ENCODE measurements at regions of chr17 and their contacts with region 1.

Region 1: DNA sequence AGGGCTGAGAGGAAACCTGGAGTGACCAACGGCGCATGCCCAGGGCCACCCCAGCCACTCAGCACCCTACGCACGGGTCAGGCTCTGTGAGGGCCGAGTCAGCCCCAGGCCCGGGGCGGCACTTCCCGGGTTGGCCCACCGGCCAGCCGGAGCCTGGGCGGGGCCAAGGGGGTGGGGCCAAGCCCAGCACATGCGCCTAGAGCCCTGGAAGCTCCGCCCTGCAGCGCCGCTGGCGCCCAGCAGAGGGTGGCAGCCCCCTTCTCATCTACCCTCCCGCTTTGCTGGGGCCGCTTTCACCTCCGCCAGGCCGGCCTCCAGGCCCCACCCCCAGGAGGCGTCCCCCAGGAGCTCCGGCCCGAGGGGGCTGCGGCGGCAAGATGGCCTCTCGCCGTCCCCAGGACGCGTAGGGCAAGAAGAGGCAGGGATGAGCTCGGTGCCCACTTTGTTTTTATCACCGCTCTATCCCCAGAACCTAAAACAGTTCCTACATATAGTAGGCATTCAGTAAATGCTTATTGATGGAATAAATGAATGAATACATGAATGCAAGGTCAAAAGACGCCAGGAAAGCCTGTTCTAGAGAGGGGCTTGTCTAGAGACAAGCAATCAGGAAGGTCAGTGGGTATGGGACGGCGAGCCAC is 31.3 kb downstream of the MYO18A start:
- DNase-seq: peak; percentile 86 to 93 (median 90)
- H3K4me3 ChIP-seq: peak overlapping the region; percentile 37 to 84 (median 60)
- H3K27ac ChIP-seq: peak overlapping the region; percentile 20 to 97 (median 93)
- H3K27me3 ChIP-seq: no peaks in the 10 kb centered on the region
- CTCF ChIP-seq: peak; percentile 88 to 100 (median 98)

Region 2: GRCh38 chr17:29129731-29130130 is 19.2 kb before region 1 on chr17:
- intact Hi-C with region 1: loop called in 1 of 2 experiments (anchors 2 kb)
- DNase-seq: no peak
- H3K4me3 ChIP-seq: no peak overlapping the region
- H3K27ac ChIP-seq: peak overlapping the region in 15 of 59 donors; percentile 9 to 60 (median 25)
- H3K27me3 ChIP-seq: no peaks in the 10 kb centered on the region
- CTCF ChIP-seq: no peak

Region 3: DNA sequence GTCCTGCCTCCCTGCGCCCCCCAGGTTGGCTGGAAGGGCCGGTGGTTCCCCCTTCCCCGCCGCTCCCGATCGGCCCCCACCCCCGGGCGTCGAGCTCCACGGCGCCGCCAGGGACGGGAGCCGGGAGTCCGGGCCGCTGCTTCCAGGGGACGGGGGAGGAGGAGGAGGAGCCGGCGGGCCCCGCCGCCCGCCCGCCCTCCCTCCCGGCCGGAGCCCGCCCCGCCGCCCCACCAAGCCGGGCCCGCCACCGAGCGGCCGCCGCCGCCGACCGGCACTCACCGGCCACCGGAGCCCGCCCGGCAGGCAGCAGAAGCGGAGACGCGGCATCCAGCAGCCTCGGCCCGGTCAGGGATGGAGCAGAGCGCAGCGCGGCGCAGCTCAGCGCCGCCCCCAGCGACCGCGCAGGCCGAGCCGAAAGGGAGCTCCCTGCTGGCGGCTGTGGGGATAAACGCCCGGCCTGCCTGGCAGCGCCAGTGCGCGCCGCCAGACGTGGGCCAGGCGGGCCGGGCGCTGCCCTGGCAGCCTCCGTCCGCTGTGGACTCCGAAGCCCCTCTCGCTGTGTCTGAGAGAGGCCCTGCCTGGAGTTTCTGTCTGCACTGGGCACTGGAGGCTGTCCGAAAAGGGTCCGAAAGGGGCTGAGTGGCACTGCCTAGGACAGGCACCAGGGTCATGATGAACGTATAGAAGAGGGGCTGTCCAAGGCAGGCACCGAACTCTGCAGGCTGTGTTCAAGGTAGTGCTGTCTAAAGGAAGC is 31.3 kb after region 1 on chr17 and contains the start of gene MYO18A:
- intact Hi-C with region 1: loop called (anchors 2 kb)
- DNase-seq: peak; percentile 55 to 89 (median 74)
- H3K4me3 ChIP-seq: peak within 1 kb of the TSS; percentile 55 to 91 (median 78)
- H3K27ac ChIP-seq: peak within 1 kb of the TSS; percentile 85 to 100 (median 98)
- H3K27me3 ChIP-seq: no peaks in the 10 kb centered on the region
- CTCF ChIP-seq: peak; percentile 37 to 94 (median 76)
- total RNA-seq, gene MYO18A: 93.9 to 275 (median 143) TPM

Region 4: DNA sequence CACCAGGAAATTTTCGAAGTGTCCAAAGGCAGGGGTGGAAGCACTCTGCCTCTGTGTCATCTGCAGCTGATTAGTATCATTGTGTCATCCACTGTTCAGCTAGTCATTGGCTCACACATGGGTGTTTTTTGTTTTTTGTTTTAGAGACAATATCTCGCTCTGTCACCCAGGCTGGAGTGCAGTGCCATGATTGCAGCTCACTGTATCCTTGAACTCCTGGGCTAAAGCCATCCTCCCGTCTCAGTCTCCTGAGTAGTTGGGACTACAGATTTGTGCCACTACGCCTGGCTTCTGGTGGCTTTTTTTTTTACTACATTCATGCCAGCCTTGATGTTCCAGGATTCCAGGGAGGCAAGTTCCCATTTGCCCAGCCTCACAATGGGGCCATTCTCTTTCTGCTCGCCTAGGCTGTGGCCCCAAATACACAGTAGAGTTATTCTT is 63.8 kb after region 1 on chr17:
- intact Hi-C with region 1: loop called in 1 of 2 experiments (anchors 1 kb)
- DNase-seq: peak in 9 of 10 donors; percentile 42 to 91 (median 74)
- H3K4me3 ChIP-seq: peak overlapping the region in 35 of 59 donors; percentile 14 to 65 (median 30)
- H3K27ac ChIP-seq: peak overlapping the region; percentile 35 to 99 (median 94)
- H3K27me3 ChIP-seq: no peaks in the 10 kb centered on the region
- CTCF ChIP-seq: peak in 12 of 56 donors; percentile 3 to 41 (median 20)

Region 5: DNA sequence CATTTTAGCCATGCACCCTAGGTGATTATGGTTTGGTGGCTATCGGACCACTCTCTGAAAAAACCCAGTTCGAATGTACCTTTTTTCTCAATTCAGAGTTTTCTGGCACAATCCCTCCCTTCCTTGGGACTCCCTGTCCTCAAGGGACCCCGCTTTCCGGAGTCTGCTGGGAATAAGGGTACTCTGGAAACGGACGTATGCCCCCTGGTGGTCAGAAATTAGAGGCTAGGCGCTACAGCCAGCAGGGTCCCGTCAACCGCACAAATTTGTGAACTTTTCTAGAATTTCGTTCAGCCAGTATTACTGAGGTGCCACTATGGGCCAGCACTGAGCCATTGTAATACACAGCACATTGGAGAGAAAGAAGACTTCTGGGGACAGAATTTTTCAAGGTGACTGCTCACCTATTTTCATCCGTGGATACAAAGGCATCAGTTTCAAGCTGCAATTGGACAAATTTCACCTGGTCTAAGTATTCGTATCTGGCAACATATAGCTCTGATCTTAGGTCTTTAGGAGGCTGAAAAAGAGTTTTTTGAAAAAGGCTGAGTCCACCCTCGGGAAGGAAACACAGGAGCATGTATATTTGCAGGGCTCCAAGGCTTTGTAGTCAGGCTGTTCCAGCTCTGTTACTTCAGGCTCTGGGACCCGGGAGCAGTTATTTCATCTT is 70.6 kb after region 1 on chr17:
- intact Hi-C with region 1: loop called (anchors 2 kb)
- DNase-seq: peak; percentile 67 to 90 (median 85)
- H3K4me3 ChIP-seq: peak overlapping the region in 15 of 59 donors; percentile 0 to 35 (median 19)
- H3K27ac ChIP-seq: peak overlapping the region in 24 of 59 donors; percentile 4 to 73 (median 32)
- H3K27me3 ChIP-seq: no peaks in the 10 kb centered on the region
- CTCF ChIP-seq: peak; percentile 93 to 99 (median 98)

Measured in dorsolateral prefrontal cortex (tissue), 120 donors.